ENCODE measurements at regions of chr17 and their contacts with region 1.

Region 1: GRCh38 chr17:44775136-44775837 is 16.5 kb downstream of the ADAM11 start:
- DNase-seq: peak; percentile 97 to 99 (median 98)
- ATAC-seq: peak; percentile 96
- H3K4me3 ChIP-seq: peak overlapping the region; percentile 53 to 60
- H3K27ac ChIP-seq: peak overlapping the region in 1 of 2 donors; percentile 16
- H3K4me1 ChIP-seq: peaks cover 8 to 30% of the 10 kb centered on the region in 2 donors
- H3K27me3 ChIP-seq: peaks cover 0 to 71% of the 10 kb centered on the region in 2 donors
- CTCF ChIP-seq: peak in 1 of 2 donors; percentile 30

Region 2: DNA sequence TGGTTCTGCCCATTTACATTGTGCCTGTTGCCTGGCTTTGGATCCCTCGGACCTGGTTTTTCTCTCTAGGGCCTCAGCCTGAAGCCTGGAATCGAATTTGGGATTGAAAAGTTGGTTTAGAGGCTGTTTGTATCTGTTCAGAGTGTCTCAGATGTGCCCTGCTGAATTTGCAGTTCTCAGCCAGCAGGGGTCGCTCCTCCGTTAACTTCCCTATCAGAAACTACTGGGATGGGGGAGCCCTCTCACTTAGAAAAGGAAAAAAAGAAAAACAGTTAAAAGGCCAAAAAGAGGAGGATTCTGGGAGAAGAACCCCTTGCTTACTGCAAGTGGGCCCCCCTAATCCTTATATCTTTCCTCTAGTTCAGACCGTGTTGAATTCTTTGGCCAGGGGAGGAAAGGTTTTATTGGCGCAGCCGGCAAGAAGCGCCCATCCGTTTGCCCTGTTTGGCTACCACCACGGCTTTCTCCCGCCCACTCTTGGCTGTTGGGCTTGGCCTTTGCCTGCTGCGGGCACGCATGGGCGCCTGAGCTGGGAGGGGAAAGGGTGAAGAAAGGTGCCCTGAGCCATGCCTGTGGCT is 209.3 kb before region 1 on chr17:
- intact Hi-C with region 1: no loop called
- DNase-seq: no peak
- ATAC-seq: no peak
- H3K4me3 ChIP-seq: no peak overlapping the region
- H3K27ac ChIP-seq: no peak overlapping the region
- H3K4me1 ChIP-seq: no peaks in the 10 kb centered on the region
- H3K27me3 ChIP-seq: peaks cover 0 to 49% of the 10 kb centered on the region in 2 donors
- CTCF ChIP-seq: no peak

Region 3: DNA sequence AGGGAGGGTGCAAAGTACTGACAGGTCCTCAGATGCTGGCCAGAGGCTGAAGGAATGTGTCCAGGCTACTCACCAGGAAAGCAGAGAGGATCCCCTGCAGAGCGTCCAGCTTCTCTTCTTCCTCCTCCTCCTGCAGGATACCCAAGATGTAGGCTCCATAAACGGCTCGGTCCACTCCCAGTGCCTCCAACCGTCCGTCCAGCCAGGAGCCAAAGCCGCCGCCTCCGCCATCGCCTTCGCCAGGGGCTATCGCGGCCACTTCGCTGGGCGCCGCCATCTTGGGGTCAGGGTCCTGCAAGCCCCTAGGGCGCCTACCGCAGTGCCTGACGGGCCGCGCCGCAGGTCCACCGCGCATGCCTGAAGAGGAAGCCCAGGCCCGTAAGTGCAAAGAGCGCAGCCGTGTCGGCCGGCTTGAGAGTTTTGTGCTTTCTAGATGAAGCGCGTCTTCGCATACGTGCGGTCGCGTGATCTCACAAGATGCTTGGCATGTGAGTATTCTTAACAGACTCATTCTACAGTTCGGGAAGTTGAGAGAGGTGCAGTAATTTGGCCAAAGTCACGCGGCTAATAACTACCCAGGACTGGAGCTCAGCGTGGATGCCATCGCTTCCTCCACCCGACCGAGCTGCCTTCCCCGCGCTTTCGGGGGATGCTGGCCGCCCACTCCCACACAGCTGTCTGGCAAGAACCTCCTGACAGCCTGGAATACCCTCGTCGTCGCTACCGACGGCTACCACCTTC is 85.6 kb before region 1 on chr17 and contains the start of gene CCDC43:
- intact Hi-C with region 1: no loop called
- DNase-seq: peak; percentile 90 to 98 (median 93)
- ATAC-seq: peak; percentile 99
- H3K4me3 ChIP-seq: peak within 1 kb of the TSS; percentile 83 to 92
- H3K27ac ChIP-seq: peak within 1 kb of the TSS; percentile 83 to 84
- H3K4me1 ChIP-seq: peaks cover 9 to 28% of the 10 kb centered on the region in 2 donors
- H3K27me3 ChIP-seq: no peaks in the 10 kb centered on the region
- CTCF ChIP-seq: no peak
- polyA plus RNA-seq, gene CCDC43: 26.7 to 33.2 (median 32.0) TPM

Region 4: GRCh38 chr17:44864866-44865660 is 89.8 kb after region 1 on chr17:
- intact Hi-C with region 1: loop called (anchors 5 to 10 kb)
- DNase-seq: peak in 3 of 4 donors; percentile 43 to 80 (median 71)
- ATAC-seq: peak; percentile 87
- H3K4me3 ChIP-seq: no peak overlapping the region
- H3K27ac ChIP-seq: no peak overlapping the region
- H3K4me1 ChIP-seq: no peaks in the 10 kb centered on the region
- H3K27me3 ChIP-seq: no peaks in the 10 kb centered on the region
- CTCF ChIP-seq: peak; percentile 87 to 89

Region 5: GRCh38 chr17:45021607-45022287 is 246.5 kb after region 1 on chr17:
- intact Hi-C with region 1: loop called in 1 of 2 experiments (anchors 10 kb)
- DNase-seq: peak; percentile 60 to 96 (median 68)
- ATAC-seq: peak; percentile 91
- H3K4me3 ChIP-seq: peak overlapping the region; percentile 17 to 27
- H3K27ac ChIP-seq: peak overlapping the region in 1 of 2 donors; percentile 67
- H3K4me1 ChIP-seq: peaks cover 14 to 32% of the 10 kb centered on the region in 2 donors
- H3K27me3 ChIP-seq: peaks cover 0 to 52% of the 10 kb centered on the region in 2 donors
- CTCF ChIP-seq: peak; percentile 96